ENCODE measurements at regions of chr17 and their contacts with region 1.

Region 1: DNA sequence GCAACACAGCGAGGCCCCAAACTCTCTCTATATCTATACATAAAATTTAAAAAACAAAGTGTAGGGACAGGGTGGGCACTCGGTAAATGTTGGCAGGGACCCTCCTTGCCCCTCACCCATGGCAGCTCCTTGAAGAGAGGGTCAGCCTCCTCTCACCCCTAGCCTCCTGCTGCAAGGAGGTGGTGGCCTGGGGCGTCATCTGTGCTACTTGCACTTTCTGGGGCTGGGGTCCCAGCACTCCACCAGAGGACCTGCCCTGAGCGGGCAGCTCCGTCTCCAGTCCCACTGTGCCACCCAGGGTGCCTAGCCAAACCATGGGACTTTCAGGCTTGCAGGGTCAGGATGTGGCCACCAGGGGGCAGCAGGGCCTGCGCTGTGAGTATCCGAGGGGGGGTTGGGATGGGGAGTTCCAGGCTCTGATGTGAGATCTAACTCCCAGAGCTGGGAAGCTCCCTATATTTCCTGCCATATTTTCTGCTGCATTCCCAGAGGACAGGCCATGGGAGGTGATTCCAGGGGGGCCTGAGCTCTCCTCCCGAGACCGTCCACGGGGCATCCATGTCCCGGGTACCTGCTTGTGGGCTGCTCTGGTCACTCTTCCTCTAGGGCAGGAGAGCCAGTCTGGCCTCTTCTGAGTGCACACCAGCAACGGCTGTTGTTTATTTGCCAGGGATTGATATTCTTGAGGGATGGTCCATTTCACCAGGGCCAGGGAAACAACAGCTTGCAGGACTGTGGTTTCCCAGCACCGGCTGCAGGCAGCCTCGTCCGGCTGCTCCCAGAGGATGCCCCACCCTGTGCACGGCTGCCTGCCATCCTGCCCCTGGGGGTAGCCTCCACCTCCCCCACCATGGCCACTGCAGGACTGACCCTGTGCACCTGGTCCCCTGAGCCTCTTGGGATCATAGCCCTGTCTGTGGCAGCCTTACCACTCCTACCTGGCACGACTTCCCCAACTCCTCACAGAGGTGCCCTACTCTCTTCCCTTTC is 1.1 kb downstream of the GPR142 start:
- DNase-seq: peak; percentile 95
- H3K4me3 ChIP-seq: no peak overlapping the region; a peak in 1 of 4 replicates
- H3K27ac ChIP-seq: no peak overlapping the region
- H3K4me1 ChIP-seq: peaks cover 0 to 5% of the 10 kb centered on the region in 2 experiments; a peak in 1 of 4 replicates
- H3K27me3 ChIP-seq: no peaks in the 10 kb centered on the region
- CTCF ChIP-seq: peak; percentile 63
- EP300 ChIP-seq: no peak
- RAD21 ChIP-seq: peak; percentile 72

Region 2: GRCh38 chr17:74070374-74070773 is 298.0 kb before region 1 on chr17:
- CTCF ChIA-PET with region 1: no interaction called
- POLR2A ChIA-PET with region 1: no interaction called
- DNase-seq: no peak
- H3K4me3 ChIP-seq: no peak overlapping the region
- H3K27ac ChIP-seq: no peak overlapping the region
- H3K4me1 ChIP-seq: no peaks in the 10 kb centered on the region
- H3K27me3 ChIP-seq: no peaks in the 10 kb centered on the region
- CTCF ChIP-seq: no peak
- EP300 ChIP-seq: no peak
- RAD21 ChIP-seq: peak; percentile 26; the same call in 1 of the 2 replicates

Region 3: GRCh38 chr17:74296548-74296936 is 71.8 kb before region 1 on chr17:
- CTCF ChIA-PET with region 1: interaction called, 20 read pairs
- POLR2A ChIA-PET with region 1: no interaction called
- DNase-seq: peak; percentile 76
- H3K4me3 ChIP-seq: no peak overlapping the region; a peak in 1 of 4 replicates
- H3K27ac ChIP-seq: no peak overlapping the region
- H3K4me1 ChIP-seq: peaks cover 0 to 3% of the 10 kb centered on the region in 2 experiments; a peak in 1 of 4 replicates
- H3K27me3 ChIP-seq: no peaks in the 10 kb centered on the region
- CTCF ChIP-seq: peak; percentile 16; the same call in 1 of the 2 replicates
- EP300 ChIP-seq: no peak
- RAD21 ChIP-seq: peak; percentile 76

Region 4: GRCh38 chr17:74337834-74338500 is 30.4 kb before region 1 on chr17:
- CTCF ChIA-PET with region 1: interaction called, 194 read pairs
- POLR2A ChIA-PET with region 1: no interaction called
- DNase-seq: peak; percentile 36
- H3K4me3 ChIP-seq: no peak overlapping the region
- H3K27ac ChIP-seq: no peak overlapping the region
- H3K4me1 ChIP-seq: no peaks in the 10 kb centered on the region
- H3K27me3 ChIP-seq: no peaks in the 10 kb centered on the region
- CTCF ChIP-seq: no peak
- EP300 ChIP-seq: no peak
- RAD21 ChIP-seq: no peak

Region 5: GRCh38 chr17:74386386-74386785 is 18.0 kb after region 1 on chr17:
- CTCF ChIA-PET with region 1: interaction called, 159 read pairs
- POLR2A ChIA-PET with region 1: no interaction called
- DNase-seq: no peak
- H3K4me3 ChIP-seq: no peak overlapping the region
- H3K27ac ChIP-seq: no peak overlapping the region
- H3K4me1 ChIP-seq: no peaks in the 10 kb centered on the region
- H3K27me3 ChIP-seq: no peaks in the 10 kb centered on the region
- CTCF ChIP-seq: no peak
- EP300 ChIP-seq: no peak
- RAD21 ChIP-seq: no peak

Region 6: DNA sequence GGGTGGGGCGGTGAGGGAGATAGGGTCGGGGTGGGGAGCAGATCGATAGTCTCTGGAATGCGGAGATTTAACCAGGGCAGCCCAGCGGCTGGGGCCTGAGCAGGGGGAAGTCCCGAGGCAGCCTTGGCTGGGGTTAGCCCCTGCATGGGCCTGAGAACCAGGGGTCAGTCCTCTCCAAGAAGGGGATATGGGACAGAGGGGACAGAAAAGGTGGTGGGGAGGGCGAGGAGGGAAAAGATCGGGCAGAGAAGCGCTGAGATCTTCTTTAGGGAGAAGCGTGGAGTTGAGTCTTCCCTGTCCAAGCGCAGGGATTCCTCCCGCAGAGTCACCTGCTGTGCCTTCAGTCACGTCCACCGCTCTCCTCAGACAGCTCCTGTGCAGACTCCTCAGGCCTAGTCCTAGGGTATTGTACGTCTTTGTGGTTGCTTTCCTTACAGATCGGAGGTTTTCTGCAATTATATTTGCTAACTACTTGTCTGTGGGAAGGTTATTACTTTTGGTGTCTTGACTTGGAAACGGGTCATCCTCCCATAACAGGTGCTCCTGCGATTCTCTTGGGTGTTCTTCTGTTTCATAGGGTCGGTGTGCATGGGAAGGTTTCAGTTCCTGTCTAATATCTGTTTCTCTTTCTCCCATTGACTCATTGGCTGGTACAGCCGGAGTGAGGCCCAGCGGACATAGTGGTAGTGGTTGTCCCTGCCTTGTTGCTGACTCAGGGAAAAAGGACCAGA is 99.0 kb after region 1 on chr17:
- CTCF ChIA-PET with region 1: interaction called, 30 read pairs
- POLR2A ChIA-PET with region 1: no interaction called
- DNase-seq: no peak
- H3K4me3 ChIP-seq: no peak overlapping the region
- H3K27ac ChIP-seq: no peak overlapping the region
- H3K4me1 ChIP-seq: no peaks in the 10 kb centered on the region
- H3K27me3 ChIP-seq: no peaks in the 10 kb centered on the region
- CTCF ChIP-seq: no peak
- EP300 ChIP-seq: no peak
- RAD21 ChIP-seq: no peak

Region 7: DNA sequence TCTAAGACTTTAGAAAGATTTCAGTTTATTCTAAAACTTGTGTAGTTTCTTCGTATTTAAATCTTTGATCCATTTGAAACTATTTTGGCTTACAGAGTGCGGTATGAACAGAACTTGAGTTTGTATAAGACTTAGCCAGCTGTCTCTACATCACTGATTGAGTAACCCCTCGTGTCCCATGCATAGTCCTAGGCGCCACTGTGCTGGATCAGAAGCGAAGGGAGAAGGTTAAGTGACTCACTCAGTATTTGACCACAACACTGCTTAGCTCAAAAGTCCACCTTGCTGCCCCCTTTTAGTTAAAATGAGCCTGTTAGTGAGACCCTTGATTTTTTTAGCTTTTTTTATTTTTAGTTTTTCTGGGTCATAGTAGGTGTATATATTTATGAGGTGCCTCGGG is 134.5 kb after region 1 on chr17:
- CTCF ChIA-PET with region 1: interaction called, 32 read pairs
- POLR2A ChIA-PET with region 1: no interaction called
- DNase-seq: no peak
- H3K4me3 ChIP-seq: no peak overlapping the region
- H3K27ac ChIP-seq: no peak overlapping the region
- H3K4me1 ChIP-seq: no peaks in the 10 kb centered on the region
- H3K27me3 ChIP-seq: no peaks in the 10 kb centered on the region
- CTCF ChIP-seq: no peak
- EP300 ChIP-seq: no peak
- RAD21 ChIP-seq: no peak

Region 8: GRCh38 chr17:74601944-74602572 is 233.7 kb after region 1 on chr17:
- CTCF ChIA-PET with region 1: interaction called, 19 read pairs
- POLR2A ChIA-PET with region 1: no interaction called
- DNase-seq: peak; percentile 68
- H3K4me3 ChIP-seq: peak overlapping the region in 1 of 2 experiments; percentile 35; a peak in 1 of 4 replicates
- H3K27ac ChIP-seq: no peak overlapping the region
- H3K4me1 ChIP-seq: peaks cover 0 to 7% of the 10 kb centered on the region in 2 experiments; a peak in 1 of 4 replicates
- H3K27me3 ChIP-seq: no peaks in the 10 kb centered on the region
- CTCF ChIP-seq: peak; percentile 40
- EP300 ChIP-seq: no peak
- RAD21 ChIP-seq: peak; percentile 68